ENCODE measurements at regions of chr3 and their contacts with region 1.

Region 1: GRCh38 chr3:194315088-194315964 is 35.8 kb downstream of the CPN2 start:
- DNase-seq: peak; percentile 80
- ATAC-seq: peak; percentile 81
- H3K4me3 Mint-ChIP-seq: peak overlapping the region; percentile 56
- H3K27ac Mint-ChIP-seq: no peak overlapping the region
- H3K4me1 Mint-ChIP-seq: peaks cover 8% of the 10 kb centered on the region
- H3K27me3 Mint-ChIP-seq: peaks cover 53% of the 10 kb centered on the region
- CTCF ChIP-seq: peak; percentile 96

Region 2: DNA sequence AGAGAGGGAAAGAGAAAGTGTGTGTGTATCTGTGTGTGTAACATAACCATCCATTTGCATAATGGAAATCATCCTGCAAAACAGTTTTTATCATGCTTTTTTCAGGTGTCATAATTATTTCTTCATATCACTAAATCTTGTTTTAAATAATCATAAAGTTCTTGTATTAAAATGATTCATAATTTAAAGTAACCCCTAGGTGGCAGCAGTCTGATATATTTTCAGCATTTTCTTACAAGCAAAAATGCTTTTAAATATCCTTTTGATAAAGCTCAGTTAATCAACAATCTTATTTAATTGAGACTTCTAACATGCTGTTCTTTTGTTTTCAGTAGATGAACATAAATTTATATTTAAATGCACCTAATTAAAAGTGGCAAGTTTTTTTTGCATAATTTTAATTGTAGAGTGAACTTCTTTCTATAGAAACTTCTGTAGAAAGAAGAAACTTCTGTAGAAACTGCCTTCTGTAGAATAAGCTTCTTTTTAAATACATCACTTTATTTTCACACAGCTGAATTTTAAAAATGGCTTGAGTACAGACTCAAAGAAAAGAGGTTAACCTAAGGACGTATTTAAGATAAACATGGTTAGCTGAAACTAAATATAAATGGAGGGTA is 649.8 kb before region 1 on chr3:
- CTCF ChIA-PET with region 1: interaction called, 18 read pairs
- POLR2A ChIA-PET with region 1: no interaction called
- intact Hi-C with region 1: loop called (anchors 5 kb)
- DNase-seq: no peak
- ATAC-seq: no peak
- H3K4me3 Mint-ChIP-seq: no peak overlapping the region
- H3K27ac Mint-ChIP-seq: no peak overlapping the region
- H3K4me1 Mint-ChIP-seq: no peaks in the 10 kb centered on the region
- H3K27me3 Mint-ChIP-seq: no peaks in the 10 kb centered on the region
- CTCF ChIP-seq: peak; percentile 74

Region 3: DNA sequence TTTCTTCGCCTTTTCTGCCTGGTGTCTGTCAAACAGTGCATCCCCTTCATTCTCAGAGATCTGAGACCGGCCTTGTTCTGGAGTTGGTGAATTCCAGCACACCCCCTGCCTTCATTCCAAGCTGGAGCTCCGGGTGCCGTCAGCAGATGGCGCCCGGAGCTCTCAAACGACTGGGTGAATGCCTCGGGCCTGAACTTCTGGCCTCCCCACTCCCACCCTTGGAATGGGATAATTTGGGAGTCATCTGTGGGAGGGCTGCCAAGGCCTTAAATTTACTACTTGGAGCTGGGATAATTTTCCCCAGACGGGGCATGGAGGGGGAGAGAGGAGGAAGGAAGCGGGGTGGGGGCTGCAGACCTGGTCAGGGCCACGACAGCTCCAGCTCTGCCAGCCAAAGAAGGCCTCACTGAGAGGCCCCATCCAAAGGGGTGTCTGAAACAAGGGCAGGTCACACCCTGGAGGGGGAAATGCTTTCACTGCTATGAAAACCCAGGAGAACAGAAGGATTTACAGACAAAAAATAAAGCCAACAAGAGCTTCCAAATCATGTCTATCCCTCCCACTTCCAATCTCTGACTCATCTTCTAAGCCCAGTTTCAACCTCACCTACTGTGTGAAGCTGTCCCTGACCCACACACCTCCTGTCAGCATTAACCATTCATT is 534.4 kb before region 1 on chr3:
- CTCF ChIA-PET with region 1: interaction called, 94 read pairs
- POLR2A ChIA-PET with region 1: no interaction called
- intact Hi-C with region 1: loop called (anchors 5 kb)
- DNase-seq: peak; percentile 44
- ATAC-seq: peak; percentile 39
- H3K4me3 Mint-ChIP-seq: no peak overlapping the region
- H3K27ac Mint-ChIP-seq: no peak overlapping the region
- H3K4me1 Mint-ChIP-seq: peaks cover 4% of the 10 kb centered on the region
- H3K27me3 Mint-ChIP-seq: peaks cover 31% of the 10 kb centered on the region
- CTCF ChIP-seq: peak; percentile 64

Region 4: DNA sequence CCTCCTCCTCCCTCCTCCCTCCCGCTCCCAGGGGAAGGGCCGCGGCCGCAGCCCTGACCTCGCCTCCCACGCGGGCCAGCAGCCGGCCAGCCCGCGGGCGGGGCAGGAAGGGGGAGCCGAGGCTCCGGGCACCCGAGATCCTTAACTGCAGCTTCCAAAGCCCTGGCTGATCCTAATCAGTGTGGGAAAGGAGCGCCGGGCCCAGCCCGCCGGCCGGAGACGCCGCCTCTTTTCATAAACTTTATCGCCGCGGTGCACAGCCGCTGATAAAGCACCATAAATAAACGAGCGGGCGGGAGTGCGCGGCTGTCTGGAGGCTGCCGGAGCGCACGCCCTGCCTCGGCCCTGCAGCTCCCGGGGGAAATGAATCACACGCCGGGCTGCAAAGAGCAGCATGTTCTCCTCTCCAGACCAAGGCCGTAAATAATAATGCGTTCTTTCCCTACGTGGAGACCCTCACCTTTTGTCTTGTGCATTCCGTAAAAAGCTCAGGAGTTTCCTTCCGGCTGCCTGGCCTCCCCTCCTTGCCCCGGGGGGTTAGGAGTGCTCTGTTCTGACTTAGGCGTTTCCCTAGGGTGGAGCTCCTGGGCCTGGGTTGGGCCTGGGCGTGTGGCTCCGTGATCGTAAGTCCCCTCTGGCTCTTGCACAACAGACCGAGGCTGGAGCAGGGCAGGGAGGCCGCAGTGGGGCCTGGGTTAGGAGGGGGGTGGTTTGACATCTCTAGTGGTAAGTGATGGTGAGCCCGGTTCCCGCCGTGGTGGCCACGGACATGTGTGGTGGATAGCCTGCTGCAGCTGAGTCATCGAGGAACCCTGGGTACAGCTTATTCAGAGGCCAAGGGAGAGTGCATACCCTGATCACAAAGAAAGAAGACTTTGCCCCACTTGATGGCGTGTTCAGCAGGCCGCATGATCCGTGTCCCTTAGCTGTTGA is 311.9 kb before region 1 on chr3:
- CTCF ChIA-PET with region 1: no interaction called
- POLR2A ChIA-PET with region 1: no interaction called
- intact Hi-C with region 1: no loop called
- DNase-seq: peak; percentile 65
- ATAC-seq: peak; percentile 89
- H3K4me3 Mint-ChIP-seq: no peak overlapping the region
- H3K27ac Mint-ChIP-seq: no peak overlapping the region
- H3K4me1 Mint-ChIP-seq: peaks cover 11% of the 10 kb centered on the region
- H3K27me3 Mint-ChIP-seq: peaks cover 29% of the 10 kb centered on the region
- CTCF ChIP-seq: no peak

Region 5: DNA sequence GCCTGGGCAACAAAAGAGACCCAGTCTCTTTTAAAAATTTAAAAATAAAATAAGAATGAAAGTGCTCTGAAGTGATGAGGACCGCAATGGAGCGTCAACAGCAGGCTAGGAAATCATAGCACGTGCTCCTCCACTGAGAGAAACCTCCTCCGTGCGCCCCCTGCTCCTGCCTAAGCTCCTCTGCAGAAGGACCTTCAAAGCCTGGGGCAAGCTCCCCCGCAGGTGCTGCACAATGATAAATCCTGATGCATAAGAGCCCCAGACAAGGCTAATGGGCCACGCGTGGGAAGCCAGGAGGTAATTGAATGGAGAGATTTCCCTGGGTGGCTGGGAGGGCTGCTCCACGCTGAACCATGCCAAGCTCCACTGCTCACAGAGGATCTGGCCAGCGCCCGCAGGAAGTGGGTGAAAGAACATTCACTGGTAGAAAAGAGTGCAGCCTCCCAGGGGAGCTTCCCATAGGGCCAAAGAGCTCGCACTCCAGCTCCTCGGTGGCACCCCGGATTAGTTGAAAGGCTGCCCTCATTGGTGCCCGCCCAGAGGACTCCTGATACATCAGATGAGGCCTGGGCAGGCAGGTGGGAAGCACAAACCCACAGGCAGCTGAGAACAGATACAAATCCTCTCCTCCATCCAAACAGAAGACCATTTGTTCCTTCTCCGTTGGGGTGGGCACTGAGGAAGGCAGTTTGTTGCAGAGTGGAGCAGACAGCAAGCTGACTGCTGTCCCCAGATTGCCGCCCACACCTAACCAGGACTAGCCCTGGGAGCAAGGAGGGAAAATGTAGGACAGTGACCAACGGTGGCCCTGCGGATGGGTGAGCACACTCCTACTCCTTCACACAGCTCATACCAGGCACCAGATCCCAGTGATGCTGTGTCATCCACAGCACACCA is 16.7 kb before region 1 on chr3:
- CTCF ChIA-PET with region 1: interaction called, 11 read pairs
- POLR2A ChIA-PET with region 1: interaction called, 4 read pairs
- intact Hi-C with region 1: no loop called
- DNase-seq: no peak
- ATAC-seq: no peak
- H3K4me3 Mint-ChIP-seq: no peak overlapping the region
- H3K27ac Mint-ChIP-seq: no peak overlapping the region
- H3K4me1 Mint-ChIP-seq: peaks cover 5% of the 10 kb centered on the region
- H3K27me3 Mint-ChIP-seq: peaks cover 10% of the 10 kb centered on the region
- CTCF ChIP-seq: no peak

Region 6: GRCh38 chr3:194328053-194328657 is 12.8 kb after region 1 on chr3:
- CTCF ChIA-PET with region 1: interaction called, 10 read pairs
- POLR2A ChIA-PET with region 1: no interaction called
- intact Hi-C with region 1: no loop called
- DNase-seq: peak; percentile 55
- ATAC-seq: peak; percentile 38
- H3K4me3 Mint-ChIP-seq: no peak overlapping the region
- H3K27ac Mint-ChIP-seq: no peak overlapping the region
- H3K4me1 Mint-ChIP-seq: peaks cover 4% of the 10 kb centered on the region
- H3K27me3 Mint-ChIP-seq: peaks cover 17% of the 10 kb centered on the region
- CTCF ChIP-seq: no peak

Measured in activated CD8-positive, alpha-beta T cell treated with anti-CD3 and anti-CD28 coated beads for 36 hours (primary cell).